Activated naive CD4-positive, alpha-beta T cell treated with anti-CD3 and anti-CD28 coated beads, Interleukin-2, amount 10 ng/mL, durations not matched to agents 7 days and 5 days (primary cell): ENCODE measurements at regions of chr12 and their contacts with region 1.

Region 1: GRCh38 chr12:98490501-98491453 is 24.6 kb upstream of the TMPO start:
- DNase-seq: peak; percentile 88
- H3K4me3 Mint-ChIP-seq: peak overlapping the region; percentile 31
- H3K27ac Mint-ChIP-seq: peak overlapping the region; percentile 93
- H3K4me1 Mint-ChIP-seq: peaks cover 13% of the 10 kb centered on the region
- H3K27me3 Mint-ChIP-seq: peaks cover 17% of the 10 kb centered on the region

Region 2: DNA sequence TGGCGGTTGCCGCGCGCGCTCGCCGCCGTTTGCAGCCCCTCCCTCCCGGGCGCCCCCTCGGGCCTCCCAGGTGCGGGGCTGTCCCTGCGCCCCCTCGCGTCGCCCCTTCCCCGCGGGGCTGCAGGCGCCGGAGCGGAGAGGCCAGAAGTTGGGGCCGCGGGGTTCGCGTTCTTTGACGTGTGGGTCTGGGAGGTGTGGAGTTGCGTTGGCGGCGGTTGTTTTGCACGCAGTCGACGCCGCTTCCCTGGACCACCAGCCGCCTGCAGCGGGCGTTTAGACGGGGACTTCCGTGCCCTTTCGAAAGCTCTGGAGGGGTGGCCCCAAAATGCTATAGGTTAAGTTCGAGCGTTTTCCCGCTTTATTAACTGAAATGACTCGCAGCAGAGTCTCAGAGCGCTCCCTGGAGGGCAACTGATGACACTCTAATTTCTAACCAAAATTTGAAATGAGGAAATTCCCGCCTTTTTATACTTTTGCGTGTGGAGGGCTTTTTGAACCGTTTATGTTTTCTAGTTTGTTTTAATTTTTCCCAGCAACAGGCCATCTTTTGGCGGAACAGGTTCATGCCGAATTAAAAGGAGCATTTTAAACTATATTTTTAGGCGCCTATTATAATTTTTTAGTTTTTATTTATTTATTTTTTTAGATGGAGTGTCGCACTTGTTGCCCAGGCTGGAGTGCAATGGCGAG is 25.6 kb after region 1 on chr12:
- CTCF ChIA-PET with region 1: interaction called, 17 read pairs
- DNase-seq: peak; percentile 91
- H3K4me3 Mint-ChIP-seq: peak overlapping the region; percentile 100
- H3K27ac Mint-ChIP-seq: peak overlapping the region; percentile 100
- H3K4me1 Mint-ChIP-seq: peaks cover 51% of the 10 kb centered on the region
- H3K27me3 Mint-ChIP-seq: peaks cover 3% of the 10 kb centered on the region

Region 3: GRCh38 chr12:98532681-98533304 is 42.0 kb after region 1 on chr12:
- CTCF ChIA-PET with region 1: interaction called, 11 read pairs
- DNase-seq: no peak
- H3K4me3 Mint-ChIP-seq: no peak overlapping the region
- H3K27ac Mint-ChIP-seq: peak overlapping the region; percentile 71
- H3K4me1 Mint-ChIP-seq: peaks cover 21% of the 10 kb centered on the region
- H3K27me3 Mint-ChIP-seq: no peaks in the 10 kb centered on the region